Activated CD4-positive, alpha-beta T cell treated with anti-CD3 and anti-CD28 coated beads, Interleukin-2, amount 10 ng/mL, durations not matched to agents 7 days and 5 days (primary cell): ENCODE measurements at regions of chr15 and their contacts with region 1.

Region 1: GRCh38 chr15:92808978-92809879 is 90.9 kb upstream of the CHD2 start:
- DNase-seq: peak; percentile 99
- H3K4me3 Mint-ChIP-seq: peak overlapping the region; percentile 91
- H3K27ac Mint-ChIP-seq: peak overlapping the region; percentile 99
- H3K4me1 Mint-ChIP-seq: peaks cover 55% of the 10 kb centered on the region
- H3K27me3 Mint-ChIP-seq: no peaks in the 10 kb centered on the region

Region 2: DNA sequence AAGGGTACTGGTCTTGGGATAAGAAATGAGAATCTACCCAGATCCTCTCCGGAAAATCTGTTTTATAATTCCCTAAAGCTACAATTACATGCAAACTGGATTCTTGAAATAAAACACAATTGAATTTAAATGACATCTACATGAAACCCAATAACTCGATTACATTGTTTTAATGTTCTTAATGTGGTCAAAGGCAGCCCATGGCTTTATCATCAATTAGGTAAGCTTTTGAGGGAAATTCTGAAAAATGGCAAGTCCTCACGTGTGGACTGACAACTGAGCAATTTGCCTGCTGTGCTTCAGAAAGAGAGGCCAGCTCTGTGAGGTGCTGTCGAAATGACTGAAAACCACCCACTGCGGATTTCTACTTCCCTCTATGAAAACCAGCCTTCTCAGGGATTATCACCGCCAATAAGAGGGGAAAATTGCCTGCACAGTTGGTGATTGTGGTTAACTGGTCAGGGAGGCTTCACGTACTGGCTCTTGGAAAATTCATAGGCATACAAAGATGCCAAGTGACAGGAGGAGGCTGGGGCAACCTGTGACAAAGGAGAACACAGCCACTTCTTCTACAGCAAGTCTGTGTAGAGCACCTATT is 1156.5 kb before region 1 on chr15:
- CTCF ChIA-PET with region 1: no interaction called
- POLR2A ChIA-PET with region 1: no interaction called
- DNase-seq: no peak
- H3K4me3 Mint-ChIP-seq: no peak overlapping the region
- H3K27ac Mint-ChIP-seq: no peak overlapping the region
- H3K4me1 Mint-ChIP-seq: peaks cover 8% of the 10 kb centered on the region
- H3K27me3 Mint-ChIP-seq: peaks cover 24% of the 10 kb centered on the region

Region 3: GRCh38 chr15:92780843-92781242 is 28.4 kb before region 1 on chr15:
- CTCF ChIA-PET with region 1: no interaction called
- POLR2A ChIA-PET with region 1: no interaction called
- DNase-seq: no peak
- H3K4me3 Mint-ChIP-seq: no peak overlapping the region
- H3K27ac Mint-ChIP-seq: no peak overlapping the region
- H3K4me1 Mint-ChIP-seq: no peaks in the 10 kb centered on the region
- H3K27me3 Mint-ChIP-seq: no peaks in the 10 kb centered on the region

Region 4: DNA sequence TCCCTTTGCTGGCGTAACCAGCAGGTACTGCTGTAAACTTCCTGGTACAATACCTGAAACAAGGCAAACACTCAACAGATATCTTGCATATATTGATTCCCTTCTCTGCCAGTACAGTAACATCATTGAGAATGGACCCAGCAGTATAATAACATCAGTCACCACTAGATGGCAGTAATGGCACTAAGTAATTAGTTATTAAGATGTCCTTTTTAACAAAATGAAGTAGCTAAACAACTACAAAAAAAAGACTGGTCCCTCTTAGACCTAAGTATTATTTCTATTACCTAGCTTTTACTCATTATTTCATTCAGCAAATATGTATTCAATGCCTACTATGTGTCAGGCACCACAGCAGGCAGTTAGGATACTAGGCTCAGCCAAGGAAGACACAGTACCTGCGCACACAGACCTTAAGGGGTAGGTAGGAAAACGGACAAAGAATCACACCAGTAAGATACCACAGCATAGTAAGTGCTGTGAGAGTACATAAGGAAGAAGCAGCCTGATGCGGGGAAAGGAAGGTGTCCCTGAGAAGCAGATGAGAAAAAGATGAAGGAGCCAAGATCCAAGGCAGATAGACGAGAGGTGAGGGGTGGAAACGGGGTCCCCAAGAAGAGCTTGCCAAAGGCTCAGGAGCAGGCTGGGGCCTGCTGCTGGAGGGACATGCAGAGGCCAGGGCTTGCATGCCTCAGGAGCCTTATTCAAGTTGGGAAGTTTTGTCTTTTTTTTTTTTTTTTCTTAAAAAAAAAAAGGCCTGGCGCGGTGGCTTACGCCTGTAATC is 11.9 kb before region 1 on chr15:
- CTCF ChIA-PET with region 1: interaction called, 52 read pairs
- POLR2A ChIA-PET with region 1: no interaction called
- DNase-seq: peak; percentile 75
- H3K4me3 Mint-ChIP-seq: no peak overlapping the region
- H3K27ac Mint-ChIP-seq: peak overlapping the region; percentile 65
- H3K4me1 Mint-ChIP-seq: peaks cover 23% of the 10 kb centered on the region
- H3K27me3 Mint-ChIP-seq: no peaks in the 10 kb centered on the region

Region 5: DNA sequence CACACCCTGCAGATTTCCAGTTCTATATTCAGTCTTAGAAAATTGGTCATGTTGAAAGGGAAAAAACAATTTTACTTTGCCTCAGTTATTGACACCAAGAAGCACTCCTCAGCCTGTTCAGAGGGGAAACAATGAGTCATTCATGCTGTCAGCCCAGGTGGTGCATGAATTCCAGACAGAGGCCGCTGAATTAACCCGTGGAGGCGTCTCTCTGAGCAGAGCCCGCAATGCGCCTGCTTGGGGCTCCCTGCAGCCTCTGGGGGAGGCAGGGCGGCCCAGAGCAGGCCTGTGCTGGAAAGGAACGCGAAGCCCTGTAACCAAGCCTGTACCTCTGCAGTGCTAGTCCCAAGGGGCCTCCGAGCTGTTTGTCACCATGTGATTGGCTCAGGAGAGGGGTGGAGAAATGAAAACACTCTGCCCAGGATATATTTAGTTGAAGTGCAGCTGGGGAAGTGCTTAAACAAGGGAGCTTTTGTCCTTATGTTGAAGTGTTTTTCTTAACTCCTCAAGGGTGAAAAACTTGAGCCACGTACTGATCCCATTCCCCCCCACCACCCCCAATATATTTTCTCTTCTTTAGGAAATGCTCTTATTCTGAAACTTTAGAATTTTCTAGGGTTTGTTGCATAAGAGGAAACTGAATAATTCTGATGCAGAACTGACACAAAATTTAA is 22.6 kb after region 1 on chr15:
- CTCF ChIA-PET with region 1: interaction called, 38 read pairs
- POLR2A ChIA-PET with region 1: interaction called, 12 read pairs
- DNase-seq: peak; percentile 93
- H3K4me3 Mint-ChIP-seq: peak overlapping the region; percentile 75
- H3K27ac Mint-ChIP-seq: peak overlapping the region; percentile 95
- H3K4me1 Mint-ChIP-seq: peaks cover 51% of the 10 kb centered on the region
- H3K27me3 Mint-ChIP-seq: no peaks in the 10 kb centered on the region

Region 6: DNA sequence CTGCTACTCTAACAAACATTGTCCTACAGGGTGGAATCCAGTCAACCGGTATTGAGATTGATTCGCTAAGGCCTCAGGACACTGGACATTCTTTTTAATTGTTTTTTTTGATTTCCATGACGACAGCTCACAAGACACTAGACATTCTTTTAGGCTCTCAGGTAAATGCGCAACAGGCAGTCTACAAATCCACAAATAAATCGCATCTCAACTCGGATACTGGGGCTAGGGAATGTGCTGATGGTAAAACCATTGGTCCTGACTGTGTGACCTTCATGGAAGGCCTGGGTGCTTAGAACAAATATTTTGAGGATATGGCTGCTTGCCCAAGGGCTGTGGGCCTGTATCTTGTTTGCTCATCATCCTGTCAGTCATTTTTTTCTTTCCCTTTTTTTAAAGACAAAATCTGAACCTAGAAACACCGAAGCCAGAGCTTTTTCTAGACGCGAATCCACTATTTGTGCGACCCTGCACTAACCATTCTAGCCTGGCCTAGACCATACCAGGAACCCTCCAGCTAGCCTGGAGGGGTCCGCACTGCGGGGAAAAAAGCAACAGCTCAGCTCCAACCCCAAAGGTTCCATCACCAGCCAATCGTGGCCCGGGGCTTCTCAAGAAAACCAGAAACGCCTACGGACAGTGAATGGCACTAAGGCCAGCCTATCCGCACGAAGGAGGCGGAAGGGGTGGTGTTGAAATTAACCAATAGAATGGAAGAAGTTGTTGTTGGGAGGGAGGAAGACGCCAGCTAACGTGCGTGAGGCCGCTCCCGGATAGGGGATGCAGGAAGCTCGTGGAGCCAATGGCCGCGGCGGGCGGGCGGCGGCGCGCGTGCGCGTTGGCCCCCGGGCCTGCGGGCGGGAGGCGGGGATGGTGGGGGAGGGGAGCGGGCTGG is 72.8 kb after region 1 on chr15:
- CTCF ChIA-PET with region 1: interaction called, 39 read pairs
- POLR2A ChIA-PET with region 1: interaction called, 46 read pairs
- DNase-seq: peak; percentile 98
- H3K4me3 Mint-ChIP-seq: peak overlapping the region; percentile 84
- H3K27ac Mint-ChIP-seq: peak overlapping the region; percentile 95
- H3K4me1 Mint-ChIP-seq: peaks cover 54% of the 10 kb centered on the region
- H3K27me3 Mint-ChIP-seq: no peaks in the 10 kb centered on the region

Region 7: GRCh38 chr15:92903941-92904831 is 95.0 kb after region 1 on chr15:
- CTCF ChIA-PET with region 1: interaction called, 53 read pairs
- POLR2A ChIA-PET with region 1: interaction called, 18 read pairs
- DNase-seq: peak; percentile 99
- H3K4me3 Mint-ChIP-seq: peak overlapping the region; percentile 80
- H3K27ac Mint-ChIP-seq: peak overlapping the region; percentile 99
- H3K4me1 Mint-ChIP-seq: peaks cover 59% of the 10 kb centered on the region
- H3K27me3 Mint-ChIP-seq: no peaks in the 10 kb centered on the region

Region 8: GRCh38 chr15:92930054-92930621 is 120.9 kb after region 1 on chr15:
- CTCF ChIA-PET with region 1: interaction called, 10 read pairs
- POLR2A ChIA-PET with region 1: no interaction called
- DNase-seq: no peak
- H3K4me3 Mint-ChIP-seq: no peak overlapping the region
- H3K27ac Mint-ChIP-seq: no peak overlapping the region
- H3K4me1 Mint-ChIP-seq: peaks cover 45% of the 10 kb centered on the region
- H3K27me3 Mint-ChIP-seq: no peaks in the 10 kb centered on the region